ENCODE measurements at regions of chr19 and their contacts with region 1.

Region 1: DNA sequence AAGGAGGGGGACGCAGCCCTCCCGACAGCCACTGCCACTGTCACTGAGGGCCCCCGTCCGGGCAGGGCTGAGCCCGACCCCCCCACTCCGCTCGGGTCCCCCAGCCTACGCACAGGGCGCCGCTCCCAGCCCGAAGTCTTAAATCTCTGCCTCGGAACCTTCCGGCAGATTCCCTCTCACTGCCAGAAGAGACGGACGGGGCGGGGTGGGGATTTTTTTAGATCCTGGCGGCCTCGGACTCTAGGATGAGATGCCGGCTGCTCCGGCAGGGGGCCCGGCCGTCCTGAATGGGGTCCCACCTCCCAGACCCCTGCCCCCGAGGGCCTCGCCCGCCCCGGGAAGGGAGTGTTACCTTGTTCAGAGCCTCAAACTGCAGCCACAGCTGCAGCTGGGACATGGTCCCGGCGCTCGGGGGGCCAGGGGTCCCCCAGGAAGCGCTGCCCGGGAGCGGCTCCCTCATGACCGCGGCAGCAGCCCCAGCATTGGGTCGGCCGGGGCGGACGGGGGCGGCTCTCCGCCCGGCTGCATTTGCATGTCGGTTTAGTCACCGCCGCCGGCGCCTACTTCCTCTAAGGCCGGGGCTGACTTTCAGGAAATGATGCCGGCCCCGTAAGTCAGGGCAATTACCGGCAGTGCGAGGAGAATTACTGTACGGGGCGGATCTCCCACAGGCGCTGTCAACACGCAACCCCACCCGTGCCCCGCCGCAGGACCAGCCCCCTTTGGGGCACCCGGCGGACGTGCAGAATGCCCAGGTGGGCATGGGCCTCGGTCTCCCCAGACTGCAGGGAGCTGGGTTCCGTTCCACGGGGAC is 28.2 kb downstream of the GPX4 start:
- DNase-seq: peak; percentile 83 to 88
- ATAC-seq: peak; percentile 77 to 89 (median 86)
- H3K4me3 ChIP-seq: peak overlapping the region; percentile 54 to 88 (median 76)
- H3K27ac ChIP-seq: peak overlapping the region; percentile 82 to 98 (median 92)
- H3K4me1 ChIP-seq: peaks cover 13 to 84% (median 41%) of the 10 kb centered on the region in 9 donors
- H3K27me3 ChIP-seq: no peaks in the 10 kb centered on the region
- CTCF ChIP-seq: peak in 4 of 9 donors; percentile 18 to 47 (median 38)

Region 2: GRCh38 chr19:1046836-1047695 is 84.9 kb before region 1 on chr19:
- intact Hi-C with region 1: loop called in 1 of 10 experiments (anchors 1 kb)
- DNase-seq: no peak
- ATAC-seq: no peak
- H3K4me3 ChIP-seq: no peak overlapping the region
- H3K27ac ChIP-seq: no peak overlapping the region
- H3K4me1 ChIP-seq: peaks cover 0 to 1% (median 0%) of the 10 kb centered on the region in 9 donors
- H3K27me3 ChIP-seq: no peaks in the 10 kb centered on the region
- CTCF ChIP-seq: no peak

Region 3: GRCh38 chr19:1151917-1152617 is 20.1 kb after region 1 on chr19:
- intact Hi-C with region 1: loop called in 1 of 10 experiments (anchors 2 kb)
- DNase-seq: peak; percentile 61 to 84
- ATAC-seq: peak; percentile 53 to 82 (median 68)
- H3K4me3 ChIP-seq: peak overlapping the region in 8 of 10 donors; percentile 4 to 37 (median 27)
- H3K27ac ChIP-seq: peak overlapping the region; percentile 4 to 93 (median 76)
- H3K4me1 ChIP-seq: peaks cover 29 to 68% (median 60%) of the 10 kb centered on the region in 9 donors
- H3K27me3 ChIP-seq: no peaks in the 10 kb centered on the region
- CTCF ChIP-seq: no peak

Region 4: DNA sequence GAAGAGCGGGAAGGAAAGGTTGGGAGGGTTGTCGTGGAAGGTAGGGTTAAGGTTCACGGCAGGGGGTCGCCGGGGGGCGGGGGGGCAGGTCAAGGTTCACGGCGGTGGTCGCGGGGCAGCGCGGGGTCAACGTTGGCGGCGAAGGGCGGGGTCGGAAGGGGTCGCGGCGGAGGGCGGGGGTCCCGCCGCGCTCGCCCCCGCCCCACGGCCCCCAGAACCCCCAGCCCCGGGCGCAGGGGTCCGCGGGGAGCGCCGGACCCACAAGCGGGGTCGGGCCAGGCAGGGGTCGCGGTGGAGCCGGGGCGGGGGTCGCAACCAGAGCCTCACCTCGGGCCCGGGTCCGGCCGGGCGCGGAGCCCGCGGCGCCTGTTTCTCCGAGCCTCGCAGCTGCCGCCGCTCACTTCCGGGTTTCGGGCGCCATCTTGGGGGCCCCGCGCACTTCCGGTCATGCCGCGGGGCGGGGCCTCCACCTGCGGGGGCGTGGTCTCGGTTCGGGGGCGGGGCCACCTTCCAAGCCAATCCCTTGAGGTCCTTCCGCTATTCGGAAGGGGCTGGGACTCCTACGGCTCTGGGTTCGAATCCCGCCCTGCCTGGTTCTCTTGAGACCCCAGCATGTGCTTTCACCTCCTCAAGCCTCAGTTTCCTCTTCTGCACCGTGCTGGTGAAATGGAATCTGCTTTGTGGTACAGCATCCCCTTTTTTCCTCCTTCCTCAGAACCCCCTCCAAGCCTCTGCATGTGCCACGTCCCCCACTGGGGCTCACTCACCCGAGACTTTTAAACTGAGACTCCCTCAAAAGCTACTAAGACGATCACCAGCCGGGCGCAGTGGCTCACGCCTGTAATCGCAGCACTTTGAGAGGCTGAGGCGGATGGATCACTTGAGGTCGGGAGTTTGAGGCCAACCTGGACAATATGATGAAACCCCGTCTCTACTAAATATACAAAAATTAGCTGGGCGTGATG is 42.2 kb after region 1 on chr19 and contains the start of gene SBNO2:
- intact Hi-C with region 1: loop called in 6 of 10 experiments (anchors 5 to 10 kb)
- DNase-seq: peak; percentile 87 to 93
- ATAC-seq: peak; percentile 78 to 92 (median 87)
- H3K4me3 ChIP-seq: peak within 1 kb of the TSS; percentile 71 to 96 (median 80)
- H3K27ac ChIP-seq: peak within 1 kb of the TSS; percentile 70 to 98 (median 92)
- H3K4me1 ChIP-seq: peaks cover 0 to 74% (median 20%) of the 10 kb centered on the region in 9 donors
- H3K27me3 ChIP-seq: no peaks in the 10 kb centered on the region
- CTCF ChIP-seq: no peak
- total RNA-seq, gene SBNO2: 12.6 to 61.3 (median 16.1) TPM

Region 5: DNA sequence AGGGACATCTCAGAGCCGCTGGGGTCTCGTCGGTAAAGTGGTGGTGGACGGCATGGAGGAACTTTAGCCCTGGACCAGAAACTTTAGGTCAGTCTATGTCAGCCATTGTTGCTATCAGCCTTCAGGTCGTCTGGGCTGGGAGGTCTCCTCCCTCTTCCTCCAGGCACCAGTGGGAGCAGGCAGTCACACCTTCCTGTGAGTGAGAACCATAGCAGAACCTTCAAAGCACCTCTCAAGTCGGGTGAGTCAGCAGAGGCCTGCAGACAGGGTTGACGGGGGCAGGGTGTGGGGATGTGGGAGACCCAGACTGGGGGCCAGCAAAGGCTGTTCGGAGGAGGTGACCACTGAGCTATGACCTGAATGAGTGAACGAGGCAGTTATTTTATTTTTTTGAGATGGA is 57.5 kb after region 1 on chr19:
- intact Hi-C with region 1: loop called in 1 of 10 experiments (anchors 5 kb)
- DNase-seq: no peak
- ATAC-seq: no peak
- H3K4me3 ChIP-seq: no peak overlapping the region
- H3K27ac ChIP-seq: no peak overlapping the region
- H3K4me1 ChIP-seq: peaks cover 0 to 8% (median 0%) of the 10 kb centered on the region in 9 donors
- H3K27me3 ChIP-seq: no peaks in the 10 kb centered on the region
- CTCF ChIP-seq: no peak

Region 6: DNA sequence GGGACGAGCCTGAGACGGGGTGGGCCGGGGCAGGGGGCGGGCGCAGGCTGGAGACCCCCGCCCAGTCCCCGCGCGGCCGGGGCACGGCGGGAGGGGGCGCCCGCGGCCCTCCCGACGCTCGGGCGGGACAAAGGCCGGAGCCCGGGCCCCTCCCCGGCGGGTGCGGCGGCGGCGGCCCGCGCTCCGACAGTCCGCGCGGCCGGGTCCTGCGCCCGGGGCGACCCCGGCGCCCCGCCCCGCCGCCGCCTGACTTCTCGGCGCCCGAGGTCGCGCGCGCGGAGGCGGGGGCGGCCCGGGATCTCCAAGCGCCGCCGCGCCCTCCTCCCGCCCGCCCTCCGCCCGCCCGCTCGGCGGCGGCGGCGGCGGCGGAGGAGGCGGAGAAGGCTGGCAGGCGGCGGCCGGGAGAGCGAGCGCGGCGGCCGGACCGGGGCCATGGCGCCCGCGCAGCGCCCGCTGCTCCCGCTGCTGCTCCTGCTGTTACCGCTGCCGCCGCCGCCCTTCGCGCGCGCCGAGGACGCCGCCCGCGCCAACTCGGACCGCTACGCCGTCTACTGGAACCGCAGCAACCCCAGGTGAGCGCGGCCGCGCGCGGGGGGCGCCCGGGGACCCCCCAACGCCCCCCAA is 153.9 kb after region 1 on chr19 and contains the start of gene EFNA2:
- intact Hi-C with region 1: no loop called
- DNase-seq: no peak
- ATAC-seq: no peak
- H3K4me3 ChIP-seq: peak within 1 kb of the TSS in 1 of 10 donors; percentile 15
- H3K27ac ChIP-seq: no peak within 1 kb of the TSS
- H3K4me1 ChIP-seq: peaks cover 0 to 16% (median 3%) of the 10 kb centered on the region in 9 donors
- H3K27me3 ChIP-seq: peaks cover 22 to 76% (median 71%) of the 10 kb centered on the region in 7 donors
- CTCF ChIP-seq: no peak
- total RNA-seq, gene EFNA2: 0.45 TPM in 1 of 10 donors, not detected in the others

Measured in heart right ventricle (tissue), 16 donors.